B cell (primary cell): ENCODE measurements at regions of chr1 and their contacts with region 1.

Region 1: DNA sequence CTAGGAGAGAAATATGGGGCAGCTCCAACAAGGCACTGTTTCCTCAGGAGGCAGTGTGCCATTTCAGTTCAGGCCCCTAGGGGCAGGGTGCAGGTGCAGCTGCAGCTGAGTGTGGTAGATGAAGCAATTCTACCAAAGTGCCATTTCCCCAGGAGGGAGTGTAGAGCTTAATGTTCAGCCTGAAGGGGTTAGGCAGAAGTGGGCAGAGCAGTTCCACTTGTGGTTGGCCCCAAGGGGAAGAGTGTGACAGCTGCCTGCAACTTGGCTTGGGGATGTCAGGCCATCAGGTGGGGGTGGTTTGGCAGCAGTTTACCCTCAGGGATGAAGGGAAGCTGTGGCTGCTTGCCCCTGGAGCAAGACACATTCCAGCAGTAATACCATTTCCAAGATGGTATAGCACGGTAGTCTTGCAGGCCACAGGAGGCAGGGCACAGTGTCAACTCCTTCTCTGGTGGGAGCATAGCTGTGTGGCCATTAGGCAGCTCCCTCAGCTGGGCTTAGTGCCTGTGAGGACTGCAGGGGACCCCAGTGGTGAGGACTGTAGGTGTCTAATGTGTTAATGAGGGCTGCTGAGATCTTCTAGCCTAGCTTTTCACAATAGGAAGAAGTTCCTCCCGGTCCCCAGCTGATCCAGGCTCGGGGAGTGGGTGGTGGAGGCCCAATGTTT is 34.8 kb downstream of the RGSL1 start:
- DNase-seq: peak; percentile 79
- ATAC-seq: peak; percentile 99
- H3K4me3 ChIP-seq: no peak overlapping the region
- H3K4me3 Mint-ChIP-seq: peak overlapping the region; percentile 12
- H3K27ac ChIP-seq: no peak overlapping the region
- H3K27ac Mint-ChIP-seq: peak overlapping the region; percentile 10
- H3K4me1 ChIP-seq: peaks cover 19 to 22% of the 10 kb centered on the region in 2 donors
- H3K4me1 Mint-ChIP-seq: peaks cover 38% of the 10 kb centered on the region
- H3K27me3 ChIP-seq: no peaks in the 10 kb centered on the region
- H3K27me3 Mint-ChIP-seq: no peaks in the 10 kb centered on the region
- CTCF ChIP-seq: peak; percentile 69

Region 2: GRCh38 chr1:182410620-182411273 is 74.0 kb before region 1 on chr1:
- CTCF ChIA-PET with region 1: no interaction called
- POLR2A ChIA-PET with region 1: no interaction called
- intact Hi-C with region 1: no loop called
- DNase-seq: no peak
- ATAC-seq: no peak
- H3K4me3 ChIP-seq: no peak overlapping the region
- H3K4me3 Mint-ChIP-seq: no peak overlapping the region
- H3K27ac ChIP-seq: no peak overlapping the region
- H3K27ac Mint-ChIP-seq: no peak overlapping the region
- H3K4me1 ChIP-seq: no peaks in the 10 kb centered on the region
- H3K4me1 Mint-ChIP-seq: no peaks in the 10 kb centered on the region
- H3K27me3 ChIP-seq: peaks cover 0 to 18% (median 2%) of the 10 kb centered on the region in 4 experiments
- H3K27me3 Mint-ChIP-seq: peaks cover 34% of the 10 kb centered on the region
- CTCF ChIP-seq: no peak

Region 3: GRCh38 chr1:182446033-182446669 is 38.6 kb before region 1 on chr1:
- CTCF ChIA-PET with region 1: interaction called, 5 read pairs
- POLR2A ChIA-PET with region 1: no interaction called
- intact Hi-C with region 1: loop called (anchors 1 kb)
- DNase-seq: peak; percentile 68
- ATAC-seq: peak; percentile 63
- H3K4me3 ChIP-seq: no peak overlapping the region
- H3K4me3 Mint-ChIP-seq: no peak overlapping the region
- H3K27ac ChIP-seq: no peak overlapping the region
- H3K27ac Mint-ChIP-seq: no peak overlapping the region
- H3K4me1 ChIP-seq: peaks cover 0 to 3% of the 10 kb centered on the region in 2 donors
- H3K4me1 Mint-ChIP-seq: peaks cover 2% of the 10 kb centered on the region
- H3K27me3 ChIP-seq: peaks cover 0 to 3% (median 0%) of the 10 kb centered on the region in 4 experiments
- H3K27me3 Mint-ChIP-seq: no peaks in the 10 kb centered on the region
- CTCF ChIP-seq: peak; percentile 92

Region 4: GRCh38 chr1:182588500-182589452 is 104.1 kb after region 1 on chr1 and contains the start of gene RNASEL:
- CTCF ChIA-PET with region 1: interaction called, 34 read pairs
- POLR2A ChIA-PET with region 1: no interaction called
- intact Hi-C with region 1: loop called (anchors 2 kb)
- DNase-seq: peak; percentile 80
- ATAC-seq: peak; percentile 87
- H3K4me3 ChIP-seq: peak within 1 kb of the TSS; percentile 68 to 100 (median 82)
- H3K4me3 Mint-ChIP-seq: peak within 1 kb of the TSS; percentile 99
- H3K27ac ChIP-seq: peak within 1 kb of the TSS; percentile 94 to 98
- H3K27ac Mint-ChIP-seq: peak within 1 kb of the TSS; percentile 99
- H3K4me1 ChIP-seq: peaks cover 28 to 32% of the 10 kb centered on the region in 2 donors
- H3K4me1 Mint-ChIP-seq: peaks cover 42% of the 10 kb centered on the region
- H3K27me3 ChIP-seq: no peaks in the 10 kb centered on the region
- H3K27me3 Mint-ChIP-seq: no peaks in the 10 kb centered on the region
- CTCF ChIP-seq: no peak
- total RNA-seq, gene RNASEL: 18.1 and 21.0 TPM in 2 replicates

Region 5: DNA sequence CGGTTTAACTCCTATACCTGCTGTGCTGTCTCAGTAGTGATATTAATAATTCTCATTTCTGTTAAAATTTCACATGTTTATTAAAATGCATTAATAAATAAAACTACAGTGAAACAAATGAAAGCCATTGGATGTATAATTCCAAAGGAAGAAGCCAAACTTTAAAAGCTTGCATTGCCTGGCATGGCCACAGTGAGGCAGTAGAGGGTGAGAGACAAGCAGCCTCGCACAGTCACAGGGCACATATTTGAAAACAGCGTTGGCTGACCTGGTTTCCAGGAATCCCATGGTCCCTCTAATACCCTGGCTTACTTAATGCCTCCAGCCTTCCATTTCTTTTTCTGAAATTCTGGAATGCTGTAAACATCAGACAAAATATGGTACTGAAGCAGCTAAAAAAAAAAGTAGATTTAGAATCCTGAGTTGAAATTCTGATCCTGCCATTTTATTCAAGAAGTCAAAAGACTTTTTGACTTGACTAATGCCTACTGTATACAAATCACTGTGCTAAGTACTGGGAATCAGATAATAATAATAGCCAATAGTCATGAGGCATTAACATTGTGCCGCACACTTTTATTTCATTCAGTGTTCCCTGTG is 111.0 kb after region 1 on chr1:
- CTCF ChIA-PET with region 1: interaction called, 34 read pairs
- POLR2A ChIA-PET with region 1: no interaction called
- intact Hi-C with region 1: no loop called
- DNase-seq: peak; percentile 67
- ATAC-seq: peak; percentile 86
- H3K4me3 ChIP-seq: no peak overlapping the region
- H3K4me3 Mint-ChIP-seq: no peak overlapping the region
- H3K27ac ChIP-seq: no peak overlapping the region
- H3K27ac Mint-ChIP-seq: no peak overlapping the region
- H3K4me1 ChIP-seq: peaks cover 0 to 3% of the 10 kb centered on the region in 2 donors
- H3K4me1 Mint-ChIP-seq: peaks cover 4% of the 10 kb centered on the region
- H3K27me3 ChIP-seq: no peaks in the 10 kb centered on the region
- H3K27me3 Mint-ChIP-seq: no peaks in the 10 kb centered on the region
- CTCF ChIP-seq: peak; percentile 92